Left colon (tissue), 2 donors: ENCODE measurements at regions of chr19 and their contacts with region 1.

Region 1: GRCh38 chr19:29610563-29611271 is 4.6 kb downstream of the POP4 start:
- DNase-seq: peak; percentile 63 to 85
- ATAC-seq: peak; percentile 63

Region 2: GRCh38 chr19:29645911-29646310 is 35.2 kb after region 1 on chr19:
- intact Hi-C with region 1: no loop called
- DNase-seq: no peak
- ATAC-seq: no peak

Region 3: GRCh38 chr19:29714953-29715700 is 104.4 kb after region 1 on chr19 and contains the start of gene C19orf12:
- intact Hi-C with region 1: loop called (anchors 5 to 10 kb)
- DNase-seq: peak; percentile 46 to 76
- ATAC-seq: peak; percentile 75
- total RNA-seq, gene C19orf12: 16.2 to 19.3 TPM